Caco-2 (cell line): ENCODE measurements at regions of chr6 and their contacts with region 1.

Region 1: GRCh38 chr6:43075670-43076463 is at the start of gene PTK7:
- DNase-seq: peak; percentile 78 to 87
- H3K4me3 ChIP-seq: peak within 1 kb of the TSS; percentile 95
- H3K4me3 Mint-ChIP-seq: peak within 1 kb of the TSS; percentile 78
- H3K27ac Mint-ChIP-seq: peak within 1 kb of the TSS; percentile 16
- H3K4me1 ChIP-seq: peaks cover 21% of the 10 kb centered on the region; the same call in 1 of the 2 replicates
- H3K4me1 Mint-ChIP-seq: peaks cover 10% of the 10 kb centered on the region
- H3K27me3 ChIP-seq: no peaks in the 10 kb centered on the region
- H3K27me3 Mint-ChIP-seq: no peaks in the 10 kb centered on the region
- CTCF ChIP-seq: no peak
- total RNA-seq, gene PTK7: 175 and 180 TPM in 2 replicates

Region 2: GRCh38 chr6:43089874-43090558 is 14.1 kb after region 1 on chr6:
- CTCF ChIA-PET with region 1: no interaction called
- POLR2A ChIA-PET with region 1: interaction called, 16 read pairs
- intact Hi-C with region 1: loop called (anchors 2 kb)
- DNase-seq: peak; percentile 83 to 87
- H3K4me3 ChIP-seq: no peak overlapping the region; the same call in none of the 2 replicates
- H3K4me3 Mint-ChIP-seq: peak overlapping the region; percentile 67
- H3K27ac Mint-ChIP-seq: peak overlapping the region; percentile 90
- H3K4me1 ChIP-seq: peaks cover 61% of the 10 kb centered on the region
- H3K4me1 Mint-ChIP-seq: peaks cover 32% of the 10 kb centered on the region
- H3K27me3 ChIP-seq: no peaks in the 10 kb centered on the region
- H3K27me3 Mint-ChIP-seq: no peaks in the 10 kb centered on the region
- CTCF ChIP-seq: no peak

Region 3: DNA sequence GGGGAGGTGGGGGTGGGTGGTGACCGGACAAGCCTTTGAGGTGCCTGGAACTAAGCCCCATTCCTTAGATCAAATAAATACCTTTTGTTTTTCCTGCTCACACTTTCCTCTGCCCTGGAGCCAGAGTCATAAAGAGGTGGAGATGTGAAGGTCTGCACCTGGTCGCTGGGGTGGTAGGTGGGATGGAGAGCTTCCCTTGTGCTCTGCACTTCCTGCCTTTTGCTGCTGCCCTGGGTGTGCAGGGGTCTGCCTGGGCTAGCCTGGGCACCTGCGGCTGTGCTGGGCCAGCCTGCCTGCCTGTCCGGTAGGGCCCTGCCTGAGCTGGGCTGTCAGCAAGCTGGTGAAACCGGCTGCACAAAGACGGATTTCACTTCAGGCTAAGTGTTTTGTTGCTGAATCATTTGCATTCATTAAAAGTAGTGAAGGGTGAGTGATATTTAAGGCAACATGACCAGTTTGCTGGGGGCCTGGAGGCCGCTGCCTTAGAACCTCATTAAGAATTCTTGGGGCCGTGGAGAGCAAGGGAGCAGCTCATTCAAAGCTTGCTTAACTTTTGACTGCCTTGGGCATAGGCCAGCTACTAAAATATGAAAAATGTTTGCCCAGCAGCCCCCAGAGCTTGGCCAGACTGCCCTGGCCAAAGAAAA is 20.7 kb after region 1 on chr6:
- CTCF ChIA-PET with region 1: interaction called, 10 read pairs
- POLR2A ChIA-PET with region 1: interaction called, 17 read pairs
- intact Hi-C with region 1: loop called (anchors 2 kb)
- DNase-seq: peak; percentile 54 to 71
- H3K4me3 ChIP-seq: no peak overlapping the region
- H3K4me3 Mint-ChIP-seq: no peak overlapping the region
- H3K27ac Mint-ChIP-seq: peak overlapping the region; percentile 87
- H3K4me1 ChIP-seq: peaks cover 53% of the 10 kb centered on the region
- H3K4me1 Mint-ChIP-seq: peaks cover 29% of the 10 kb centered on the region
- H3K27me3 ChIP-seq: no peaks in the 10 kb centered on the region
- H3K27me3 Mint-ChIP-seq: no peaks in the 10 kb centered on the region
- CTCF ChIP-seq: no peak